HCT116 (cell line): ENCODE measurements at regions of chr3 and their contacts with region 1.

Region 1: DNA sequence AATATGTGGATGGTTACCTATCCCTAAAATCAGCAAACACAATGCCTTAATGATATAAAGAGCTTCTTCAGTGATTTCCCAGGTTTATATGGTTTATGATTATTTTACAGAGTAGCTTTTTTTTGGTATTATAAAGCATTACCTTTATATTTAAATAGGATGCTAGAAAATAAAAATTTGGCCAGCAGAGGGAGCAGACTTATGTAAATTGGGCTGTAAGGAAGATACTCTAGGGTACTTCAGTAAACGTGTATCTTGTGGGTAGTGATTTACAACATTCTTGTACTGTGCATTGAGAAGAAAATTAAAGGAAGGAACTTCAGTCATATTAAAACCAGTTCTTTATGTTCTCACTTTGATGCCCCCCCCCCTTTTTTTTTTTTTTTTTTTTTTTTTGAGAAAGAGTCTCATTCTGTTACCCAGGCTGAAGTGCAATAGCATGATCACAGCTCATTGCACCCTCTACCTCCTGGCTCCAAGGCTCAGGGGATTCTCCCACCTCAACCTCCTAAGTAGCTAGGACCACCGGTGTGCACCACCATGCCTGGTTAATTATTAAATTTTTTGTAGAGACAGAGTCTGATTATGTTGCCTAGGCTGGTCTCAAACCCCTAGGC is 167.9 kb downstream of the BBX start:
- DNase-seq: peak; percentile 28
- ATAC-seq: peak; percentile 47; the same call in 1 of the 2 replicates
- H3K4me3 ChIP-seq: no peak overlapping the region
- H3K27ac ChIP-seq: no peak overlapping the region
- H3K4me1 ChIP-seq: no peaks in the 10 kb centered on the region
- H3K27me3 ChIP-seq: no peaks in the 10 kb centered on the region
- CTCF ChIP-seq: peak; percentile 9 to 65 (median 39); a peak in 4 of 6 replicates
- POLR2A ChIP-seq: no peak
- RAD21 ChIP-seq: peak; percentile 24; the same call in 1 of the 2 replicates

Region 2: GRCh38 chr3:107676469-107677309 is 13.9 kb before region 1 on chr3:
- CTCF ChIA-PET with region 1: interaction called, 34 read pairs
- POLR2A ChIA-PET with region 1: no interaction called
- RAD21 ChIA-PET with region 1: no interaction called
- intact Hi-C with region 1: no loop called
- DNase-seq: peak; percentile 4
- ATAC-seq: peak; percentile 64
- H3K4me3 ChIP-seq: no peak overlapping the region
- H3K27ac ChIP-seq: no peak overlapping the region
- H3K4me1 ChIP-seq: no peaks in the 10 kb centered on the region
- H3K27me3 ChIP-seq: no peaks in the 10 kb centered on the region
- CTCF ChIP-seq: peak; percentile 31 to 58 (median 35); a peak in 5 of 6 replicates
- POLR2A ChIP-seq: no peak
- RAD21 ChIP-seq: peak; percentile 54

Region 3: DNA sequence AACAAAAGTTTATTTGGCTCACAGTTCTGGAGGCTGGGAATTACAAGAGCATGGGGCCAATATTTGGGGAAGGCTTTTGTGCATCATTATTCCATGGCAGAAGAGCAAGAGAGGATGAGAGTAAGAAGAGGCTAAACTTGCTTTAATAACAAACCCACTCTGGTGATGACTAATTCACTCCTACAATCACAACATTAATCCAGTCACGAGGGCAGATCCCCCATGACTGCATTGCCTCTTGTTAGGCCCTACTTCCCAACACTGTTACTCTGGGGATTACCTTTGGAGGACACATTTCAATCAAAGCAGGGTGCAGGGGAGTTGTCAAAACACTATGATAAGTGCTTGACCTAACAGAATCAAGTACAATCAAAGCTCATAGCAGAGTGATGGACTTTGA is 13.8 kb after region 1 on chr3:
- CTCF ChIA-PET with region 1: interaction called, 12 read pairs
- POLR2A ChIA-PET with region 1: no interaction called
- RAD21 ChIA-PET with region 1: no interaction called
- intact Hi-C with region 1: no loop called
- DNase-seq: no peak
- ATAC-seq: no peak
- H3K4me3 ChIP-seq: no peak overlapping the region
- H3K27ac ChIP-seq: no peak overlapping the region
- H3K4me1 ChIP-seq: peaks cover 0 to 4% of the 10 kb centered on the region in 2 experiments; a peak in 1 of 4 replicates
- H3K27me3 ChIP-seq: no peaks in the 10 kb centered on the region
- CTCF ChIP-seq: no peak
- POLR2A ChIP-seq: no peak
- RAD21 ChIP-seq: no peak

Region 4: GRCh38 chr3:107710851-107711250 is 20.2 kb after region 1 on chr3:
- CTCF ChIA-PET with region 1: interaction called, 12 read pairs
- POLR2A ChIA-PET with region 1: no interaction called
- RAD21 ChIA-PET with region 1: no interaction called
- intact Hi-C with region 1: no loop called
- DNase-seq: peak; percentile 15
- ATAC-seq: peak; percentile 80
- H3K4me3 ChIP-seq: no peak overlapping the region
- H3K27ac ChIP-seq: no peak overlapping the region
- H3K4me1 ChIP-seq: peaks cover 3 to 9% of the 10 kb centered on the region in 2 experiments; a peak in 2 of 4 replicates
- H3K27me3 ChIP-seq: no peaks in the 10 kb centered on the region
- CTCF ChIP-seq: no peak
- POLR2A ChIP-seq: no peak
- RAD21 ChIP-seq: no peak